SK-N-SH (cell line): ENCODE measurements at regions of chr19 and their contacts with region 1.

Region 1: GRCh38 chr19:13033819-13034611 is 38.7 kb downstream of the NFIX start:
- DNase-seq: peak; percentile 77
- H3K4me3 ChIP-seq: peak overlapping the region in 1 of 2 experiments; percentile 13; a peak in 1 of 4 replicates
- H3K27ac ChIP-seq: peak overlapping the region in 1 of 2 experiments; percentile 43; a peak in 1 of 4 replicates
- H3K4me1 ChIP-seq: peaks cover 45 to 55% of the 10 kb centered on the region in 2 experiments
- H3K27me3 ChIP-seq: no peaks in the 10 kb centered on the region
- CTCF ChIP-seq: peak; percentile 69
- EP300 ChIP-seq: no peak
- RAD21 ChIP-seq: peak; percentile 63

Region 2: GRCh38 chr19:12983542-12984142 is 50.4 kb before region 1 on chr19:
- CTCF ChIA-PET with region 1: interaction called, 25 read pairs
- POLR2A ChIA-PET with region 1: no interaction called
- DNase-seq: peak; percentile 98
- H3K4me3 ChIP-seq: peak overlapping the region; percentile 34 to 39; a peak in 3 of 4 replicates
- H3K27ac ChIP-seq: peak overlapping the region in 1 of 2 experiments; percentile 2; a peak in 1 of 4 replicates
- H3K4me1 ChIP-seq: peaks cover 0 to 8% of the 10 kb centered on the region in 2 experiments; a peak in 1 of 4 replicates
- H3K27me3 ChIP-seq: no peaks in the 10 kb centered on the region
- CTCF ChIP-seq: peak; percentile 88
- EP300 ChIP-seq: no peak
- RAD21 ChIP-seq: peak; percentile 82

Region 3: DNA sequence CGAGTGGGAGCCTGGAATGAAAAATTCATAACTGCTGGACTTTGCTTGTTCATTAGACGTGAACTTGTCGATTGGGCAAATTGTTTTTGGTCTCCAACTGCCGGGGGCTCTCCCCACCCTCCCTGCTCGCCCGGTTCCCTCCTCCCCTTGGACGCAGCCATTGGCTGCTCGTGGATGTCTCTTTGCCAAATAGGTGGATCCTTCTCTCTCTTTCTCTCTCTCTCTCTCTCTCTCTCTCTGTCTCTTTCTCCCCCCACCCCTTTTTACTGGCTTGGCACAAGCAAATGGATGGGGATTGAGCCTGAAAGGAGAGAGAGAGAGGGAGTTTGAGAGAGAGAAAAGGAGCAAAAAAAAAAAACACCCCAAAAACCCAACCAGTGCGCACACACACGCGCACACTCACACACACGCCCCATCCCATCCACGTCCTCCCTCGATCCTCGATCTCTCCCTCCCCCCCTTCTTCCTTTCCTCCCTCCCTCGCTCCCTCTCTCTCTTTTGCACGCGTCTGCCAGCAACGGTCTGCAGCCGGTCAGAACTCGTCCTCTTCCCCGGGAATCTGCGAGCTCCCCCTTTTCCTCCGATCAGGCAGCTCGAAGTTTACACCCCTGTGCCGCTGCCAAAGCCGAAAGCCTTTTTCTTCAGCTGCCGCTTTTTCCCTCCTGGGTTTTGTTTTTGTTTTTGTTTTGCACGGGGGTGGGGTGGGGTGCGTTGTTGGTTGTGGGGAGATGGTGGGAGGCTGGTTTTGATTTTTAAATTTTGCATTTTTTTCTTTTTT is 11.0 kb before region 1 on chr19:
- CTCF ChIA-PET with region 1: interaction called, 11 read pairs
- POLR2A ChIA-PET with region 1: no interaction called
- DNase-seq: peak; percentile 87
- H3K4me3 ChIP-seq: peak overlapping the region; percentile 36 to 67
- H3K27ac ChIP-seq: peak overlapping the region; percentile 82 to 91
- H3K4me1 ChIP-seq: peaks cover 31 to 57% of the 10 kb centered on the region in 2 experiments
- H3K27me3 ChIP-seq: no peaks in the 10 kb centered on the region
- CTCF ChIP-seq: peak; percentile 19; the same call in 1 of the 2 replicates
- EP300 ChIP-seq: peak in 1 of 2 experiments; percentile 22; a peak in 2 of 4 replicates
- RAD21 ChIP-seq: no peak

Region 4: GRCh38 chr19:13051267-13052165 is 17.5 kb after region 1 on chr19:
- CTCF ChIA-PET with region 1: interaction called, 167 read pairs
- POLR2A ChIA-PET with region 1: interaction called, 7 read pairs
- DNase-seq: no peak
- H3K4me3 ChIP-seq: no peak overlapping the region
- H3K27ac ChIP-seq: peak overlapping the region; percentile 100; a peak in 1 of 4 replicates
- H3K4me1 ChIP-seq: peaks cover 59 to 67% of the 10 kb centered on the region in 2 experiments
- H3K27me3 ChIP-seq: no peaks in the 10 kb centered on the region
- CTCF ChIP-seq: no peak
- EP300 ChIP-seq: no peak
- RAD21 ChIP-seq: no peak

Region 5: GRCh38 chr19:13082192-13083007 is 48.4 kb after region 1 on chr19:
- CTCF ChIA-PET with region 1: interaction called, 11 read pairs
- POLR2A ChIA-PET with region 1: no interaction called
- DNase-seq: peak; percentile 66
- H3K4me3 ChIP-seq: no peak overlapping the region
- H3K27ac ChIP-seq: peak overlapping the region in 1 of 2 experiments; percentile 23; a peak in 2 of 4 replicates
- H3K4me1 ChIP-seq: peaks cover 10 to 33% of the 10 kb centered on the region in 2 experiments; a peak in 3 of 4 replicates
- H3K27me3 ChIP-seq: no peaks in the 10 kb centered on the region
- CTCF ChIP-seq: peak; percentile 23
- EP300 ChIP-seq: no peak
- RAD21 ChIP-seq: peak; percentile 61